ENCODE measurements at regions of chr3 and their contacts with region 1.

Region 1: DNA sequence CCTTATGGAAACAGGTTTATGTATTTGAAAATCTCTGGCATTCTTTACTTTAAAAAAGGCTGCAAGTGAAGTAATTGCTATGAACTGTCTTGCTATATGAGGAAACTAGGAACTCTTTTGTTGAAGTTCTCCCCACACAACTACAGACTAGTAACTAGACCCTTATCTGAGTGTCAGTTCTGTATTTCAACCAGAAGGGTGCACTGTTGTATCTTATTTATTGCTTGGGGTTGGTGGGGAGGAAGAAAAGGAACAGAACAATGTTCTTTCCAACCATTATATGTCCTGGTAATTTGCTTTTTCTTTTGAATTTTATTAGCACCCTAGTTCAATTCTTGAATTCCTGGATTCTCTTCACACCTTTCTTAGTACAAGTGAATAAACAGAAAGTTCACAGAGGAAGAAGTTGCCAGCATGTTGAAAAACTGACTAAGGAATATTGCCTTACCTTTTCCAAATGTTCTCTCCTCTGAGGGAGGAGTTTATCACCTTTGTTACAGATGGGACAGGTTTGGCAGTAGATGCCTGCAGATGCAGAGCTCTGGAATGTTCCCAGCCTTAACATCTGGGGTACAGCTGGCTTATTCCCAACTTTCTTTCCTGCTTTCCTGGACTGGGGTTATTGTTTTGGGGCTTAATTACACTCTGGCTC is 162.4 kb upstream of the CFAP20DC start:
- DNase-seq: no peak
- ATAC-seq: peak; percentile 37
- H3K4me3 Mint-ChIP-seq: no peak overlapping the region
- H3K27ac Mint-ChIP-seq: no peak overlapping the region
- H3K4me1 Mint-ChIP-seq: no peaks in the 10 kb centered on the region
- H3K27me3 Mint-ChIP-seq: peaks cover 3% of the 10 kb centered on the region
- CTCF ChIP-seq: no peak

Region 2: GRCh38 chr3:57464801-57465200 is 1747.5 kb before region 1 on chr3:
- CTCF ChIA-PET with region 1: no interaction called
- POLR2A ChIA-PET with region 1: no interaction called
- intact Hi-C with region 1: no loop called
- DNase-seq: no peak
- ATAC-seq: no peak
- H3K4me3 Mint-ChIP-seq: no peak overlapping the region
- H3K27ac Mint-ChIP-seq: no peak overlapping the region
- H3K4me1 Mint-ChIP-seq: no peaks in the 10 kb centered on the region
- H3K27me3 Mint-ChIP-seq: peaks cover 11% of the 10 kb centered on the region
- CTCF ChIP-seq: no peak

Region 3: DNA sequence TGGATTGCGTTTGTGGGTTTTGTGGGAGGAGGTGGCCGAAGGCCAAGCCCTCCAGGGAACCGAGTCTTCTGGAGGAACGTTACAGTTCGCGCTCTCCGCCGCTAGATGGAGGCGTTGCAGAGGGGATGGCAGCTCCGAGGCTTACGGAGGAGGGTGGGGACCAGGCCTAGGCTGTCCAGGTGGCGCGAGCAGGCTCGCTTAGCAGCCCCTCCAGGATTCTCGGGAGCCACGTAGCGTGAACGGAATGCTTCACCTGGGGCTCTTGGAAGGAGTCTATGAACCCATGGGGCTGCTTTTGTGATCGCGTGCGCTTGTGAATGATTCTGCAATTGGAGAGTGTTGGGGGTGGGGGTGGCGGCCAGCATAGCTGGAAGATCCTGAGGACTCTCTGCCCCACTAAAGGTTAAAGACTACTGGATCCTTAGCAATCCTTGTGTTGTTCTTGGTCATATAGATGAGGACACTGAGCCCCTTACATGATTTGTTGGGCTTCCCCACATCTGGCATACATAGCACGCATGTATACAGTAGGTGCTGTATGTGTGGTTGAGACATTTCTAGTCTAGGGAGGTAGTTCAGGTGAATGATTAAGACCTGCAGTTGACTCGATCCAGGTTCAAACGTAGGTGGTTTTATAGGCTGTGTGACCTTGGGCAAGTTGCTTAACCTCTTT is 571.4 kb before region 1 on chr3:
- CTCF ChIA-PET with region 1: interaction called, 3 read pairs
- POLR2A ChIA-PET with region 1: no interaction called
- intact Hi-C with region 1: loop called (anchors 5 kb)
- DNase-seq: peak; percentile 50
- ATAC-seq: peak; percentile 96
- H3K4me3 Mint-ChIP-seq: no peak overlapping the region
- H3K27ac Mint-ChIP-seq: no peak overlapping the region
- H3K4me1 Mint-ChIP-seq: peaks cover 7% of the 10 kb centered on the region
- H3K27me3 Mint-ChIP-seq: peaks cover 2% of the 10 kb centered on the region
- CTCF ChIP-seq: peak; percentile 37

Region 4: GRCh38 chr3:58824285-58824684 is 388.0 kb before region 1 on chr3:
- CTCF ChIA-PET with region 1: interaction called, 4 read pairs
- POLR2A ChIA-PET with region 1: no interaction called
- intact Hi-C with region 1: loop called (anchors 2 kb)
- DNase-seq: no peak
- ATAC-seq: no peak
- H3K4me3 Mint-ChIP-seq: no peak overlapping the region
- H3K27ac Mint-ChIP-seq: no peak overlapping the region
- H3K4me1 Mint-ChIP-seq: peaks cover 5% of the 10 kb centered on the region
- H3K27me3 Mint-ChIP-seq: no peaks in the 10 kb centered on the region
- CTCF ChIP-seq: no peak

Region 5: GRCh38 chr3:58994746-58995330 is 217.4 kb before region 1 on chr3:
- CTCF ChIA-PET with region 1: no interaction called
- POLR2A ChIA-PET with region 1: no interaction called
- intact Hi-C with region 1: loop called (anchors 10 kb)
- DNase-seq: no peak
- ATAC-seq: peak; percentile 54
- H3K4me3 Mint-ChIP-seq: peak overlapping the region; percentile 25
- H3K27ac Mint-ChIP-seq: no peak overlapping the region
- H3K4me1 Mint-ChIP-seq: peaks cover 4% of the 10 kb centered on the region
- H3K27me3 Mint-ChIP-seq: no peaks in the 10 kb centered on the region
- CTCF ChIP-seq: peak; percentile 42

Region 6: GRCh38 chr3:59450946-59451763 is 238.9 kb after region 1 on chr3:
- CTCF ChIA-PET with region 1: no interaction called
- POLR2A ChIA-PET with region 1: no interaction called
- intact Hi-C with region 1: loop called (anchors 10 kb)
- DNase-seq: no peak
- ATAC-seq: peak; percentile 92
- H3K4me3 Mint-ChIP-seq: peak overlapping the region; percentile 69
- H3K27ac Mint-ChIP-seq: peak overlapping the region; percentile 88
- H3K4me1 Mint-ChIP-seq: peaks cover 41% of the 10 kb centered on the region
- H3K27me3 Mint-ChIP-seq: no peaks in the 10 kb centered on the region
- CTCF ChIP-seq: no peak

Region 7: DNA sequence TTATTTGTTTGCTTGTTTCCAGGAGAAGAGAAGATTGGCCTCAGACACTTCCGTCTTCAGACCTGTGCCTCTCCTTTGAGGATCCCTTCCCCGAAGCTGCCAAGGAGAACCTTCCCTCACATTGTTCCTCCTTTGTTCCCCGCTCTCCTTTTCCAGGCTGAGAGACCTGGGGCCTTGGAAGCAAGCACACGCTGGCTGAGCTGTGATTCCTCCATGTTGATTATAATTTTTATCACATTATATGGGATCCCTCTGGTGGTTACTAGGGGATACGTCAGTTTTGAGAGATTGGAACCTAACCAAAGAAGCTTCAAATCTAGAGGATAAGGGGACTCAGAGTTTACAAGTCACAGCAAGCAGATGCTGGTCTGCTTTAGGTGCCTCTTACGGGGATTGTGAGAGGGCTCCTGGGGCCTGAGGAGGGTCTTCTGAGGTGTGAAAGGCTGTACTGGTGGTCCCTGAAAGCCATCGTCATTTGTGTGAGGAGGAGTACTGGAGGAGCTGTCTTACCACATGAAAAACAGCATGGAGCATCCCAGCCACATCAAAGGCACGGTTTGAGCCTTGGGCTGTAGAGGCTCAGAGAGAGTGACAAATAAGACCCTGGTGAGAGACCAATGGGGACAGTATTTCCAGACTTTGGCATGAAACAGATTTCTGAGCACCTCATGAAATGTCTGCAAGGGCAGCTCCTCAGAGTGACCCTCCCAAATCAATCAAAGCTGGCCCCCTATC is 597.6 kb after region 1 on chr3:
- CTCF ChIA-PET with region 1: interaction called, 3 read pairs
- POLR2A ChIA-PET with region 1: no interaction called
- intact Hi-C with region 1: loop called (anchors 1 kb)
- DNase-seq: no peak
- ATAC-seq: no peak
- H3K4me3 Mint-ChIP-seq: no peak overlapping the region
- H3K27ac Mint-ChIP-seq: peak overlapping the region; percentile 10
- H3K4me1 Mint-ChIP-seq: peaks cover 25% of the 10 kb centered on the region
- H3K27me3 Mint-ChIP-seq: no peaks in the 10 kb centered on the region
- CTCF ChIP-seq: no peak